CD4-positive, alpha-beta T cell (primary cell): ENCODE measurements at regions of chr4 and their contacts with region 1.

Region 1: DNA sequence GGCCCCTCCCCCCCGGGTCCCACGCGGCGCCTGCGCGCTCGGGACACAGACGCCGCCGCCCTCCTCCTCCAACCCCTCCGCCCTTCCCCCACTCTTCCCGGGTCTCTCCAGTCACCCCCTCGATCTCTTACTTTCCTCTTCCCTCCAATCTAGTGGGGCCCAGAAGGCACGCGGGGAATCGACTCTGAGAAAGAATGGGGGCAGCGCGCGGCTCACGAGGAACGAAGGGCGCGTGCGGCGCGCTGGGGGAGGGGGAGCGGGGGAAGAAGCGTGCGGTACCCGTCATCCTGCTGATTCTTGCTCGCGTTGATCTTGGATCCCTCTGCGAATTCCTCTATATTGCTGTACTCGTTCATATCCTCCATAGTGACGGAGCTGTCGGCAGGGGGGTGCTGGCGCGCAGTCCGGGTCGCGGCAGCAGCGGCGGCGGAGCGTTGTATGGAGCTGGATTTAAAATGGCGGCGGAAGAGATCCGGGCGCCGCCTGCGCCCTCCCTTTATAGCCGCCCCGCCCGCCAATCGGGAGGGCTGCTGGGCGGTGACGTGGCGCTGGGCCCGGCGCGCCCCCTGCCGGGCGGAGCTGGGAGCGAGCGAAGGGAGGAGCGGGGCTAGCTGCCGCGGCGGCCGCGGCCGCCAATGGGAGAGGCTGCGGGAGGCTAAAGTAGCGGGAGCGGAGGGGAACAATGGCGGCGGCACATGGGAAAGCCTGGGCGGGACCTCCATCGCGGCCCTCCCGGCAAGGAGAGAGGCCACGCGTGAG is 1.1 kb downstream of the HNRNPDL start:
- DNase-seq: peak; percentile 87 to 98 (median 94)
- ATAC-seq: peak; percentile 59
- H3K4me3 ChIP-seq: peak overlapping the region; percentile 93
- H3K4me3 Mint-ChIP-seq: peak overlapping the region; percentile 100
- H3K27ac ChIP-seq: peak overlapping the region; percentile 98 to 99
- H3K27ac Mint-ChIP-seq: peak overlapping the region; percentile 99
- H3K4me1 ChIP-seq: peaks cover 36% of the 10 kb centered on the region
- H3K4me1 Mint-ChIP-seq: peaks cover 84% of the 10 kb centered on the region
- H3K27me3 ChIP-seq: no peaks in the 10 kb centered on the region
- H3K27me3 Mint-ChIP-seq: peaks cover 4% of the 10 kb centered on the region
- CTCF ChIP-seq: peak; percentile 91

Region 2: GRCh38 chr4:82352913-82353366 is 76.2 kb before region 1 on chr4:
- CTCF ChIA-PET with region 1: interaction called, 4 read pairs
- POLR2A ChIA-PET with region 1: interaction called, 18 read pairs
- intact Hi-C with region 1: no loop called
- DNase-seq: no peak
- ATAC-seq: peak; percentile 17
- H3K4me3 ChIP-seq: no peak overlapping the region
- H3K4me3 Mint-ChIP-seq: no peak overlapping the region
- H3K27ac ChIP-seq: no peak overlapping the region
- H3K27ac Mint-ChIP-seq: peak overlapping the region; percentile 77
- H3K4me1 ChIP-seq: peaks cover 4% of the 10 kb centered on the region
- H3K4me1 Mint-ChIP-seq: peaks cover 61% of the 10 kb centered on the region
- H3K27me3 ChIP-seq: no peaks in the 10 kb centered on the region
- H3K27me3 Mint-ChIP-seq: no peaks in the 10 kb centered on the region
- CTCF ChIP-seq: no peak

Region 3: DNA sequence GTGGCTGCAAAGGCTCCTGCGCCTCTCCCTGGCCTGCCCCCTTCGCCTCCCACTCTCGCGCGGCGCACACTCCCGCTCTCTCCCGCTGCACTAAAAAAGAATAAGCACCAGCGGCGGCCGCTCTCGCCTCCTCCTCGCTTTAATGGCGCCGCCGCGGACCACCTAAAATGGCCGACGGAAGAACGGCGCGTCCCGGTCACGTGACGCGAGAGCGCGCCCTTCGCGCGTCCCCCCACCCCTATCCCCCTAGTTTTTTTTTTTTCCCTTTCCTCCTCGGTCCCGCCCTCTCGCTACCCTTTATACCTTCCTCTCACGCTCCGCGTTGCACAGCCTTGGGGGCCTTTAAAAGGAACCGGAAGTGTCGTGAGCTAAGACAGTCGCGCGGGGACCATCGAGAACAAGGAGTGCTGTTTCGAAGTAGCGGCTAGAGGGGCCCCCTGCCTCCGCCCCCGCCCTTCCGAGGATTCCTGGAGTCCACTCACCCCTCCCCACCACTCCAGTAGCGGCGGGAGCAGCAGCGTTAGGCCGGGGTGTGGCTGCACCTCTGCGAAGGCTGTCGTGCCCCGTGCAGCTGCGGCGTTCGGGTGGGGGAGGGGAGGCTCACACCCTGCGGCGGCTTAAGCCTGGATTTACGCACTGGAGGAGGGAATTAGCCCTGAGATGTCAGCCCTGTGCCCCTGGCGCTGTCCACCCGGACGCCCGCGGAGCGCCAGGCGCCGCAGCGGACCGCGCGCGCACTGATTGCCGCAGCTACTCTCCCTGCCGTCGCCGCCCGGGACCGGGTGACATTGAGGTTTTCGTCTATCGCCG is 55.1 kb before region 1 on chr4 and contains the start of gene HNRNPD:
- CTCF ChIA-PET with region 1: interaction called, 28 read pairs
- POLR2A ChIA-PET with region 1: interaction called, 277 read pairs
- intact Hi-C with region 1: loop called (anchors 1 kb)
- DNase-seq: peak; percentile 77 to 99 (median 88)
- ATAC-seq: peak; percentile 83
- H3K4me3 ChIP-seq: peak within 1 kb of the TSS; percentile 97
- H3K4me3 Mint-ChIP-seq: peak within 1 kb of the TSS; percentile 99
- H3K27ac ChIP-seq: peak within 1 kb of the TSS; percentile 99
- H3K27ac Mint-ChIP-seq: peak within 1 kb of the TSS; percentile 98
- H3K4me1 ChIP-seq: peaks cover 24% of the 10 kb centered on the region
- H3K4me1 Mint-ChIP-seq: peaks cover 71% of the 10 kb centered on the region
- H3K27me3 ChIP-seq: no peaks in the 10 kb centered on the region
- H3K27me3 Mint-ChIP-seq: no peaks in the 10 kb centered on the region
- CTCF ChIP-seq: peak; percentile 11
- total RNA-seq, gene HNRNPD: 235 to 244 TPM

Region 4: DNA sequence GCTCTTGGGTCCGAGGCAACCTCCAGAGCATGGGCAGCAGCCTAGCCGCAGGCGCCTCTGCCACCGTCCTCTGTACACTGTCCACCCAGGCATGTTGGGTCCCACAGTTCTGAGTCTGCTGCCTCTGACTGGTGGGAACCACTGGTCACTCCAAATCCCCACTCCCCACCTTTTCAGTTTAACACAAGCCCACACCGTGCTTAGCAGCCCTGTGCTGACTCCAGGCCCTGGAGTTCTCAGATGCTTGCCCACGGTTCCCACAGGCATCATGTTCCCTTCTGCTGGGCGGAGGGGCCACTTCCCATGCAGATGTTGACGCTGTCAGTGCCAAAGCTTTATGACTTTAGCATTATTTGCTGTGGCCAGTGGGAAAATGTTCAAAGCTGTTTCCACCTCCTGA is 264.9 kb after region 1 on chr4:
- CTCF ChIA-PET with region 1: no interaction called
- POLR2A ChIA-PET with region 1: no interaction called
- intact Hi-C with region 1: no loop called
- DNase-seq: no peak
- ATAC-seq: no peak
- H3K4me3 ChIP-seq: no peak overlapping the region
- H3K4me3 Mint-ChIP-seq: no peak overlapping the region
- H3K27ac ChIP-seq: no peak overlapping the region
- H3K27ac Mint-ChIP-seq: no peak overlapping the region
- H3K4me1 ChIP-seq: no peaks in the 10 kb centered on the region
- H3K4me1 Mint-ChIP-seq: no peaks in the 10 kb centered on the region
- H3K27me3 ChIP-seq: peaks cover 0 to 2% of the 10 kb centered on the region in 2 experiments
- H3K27me3 Mint-ChIP-seq: no peaks in the 10 kb centered on the region
- CTCF ChIP-seq: no peak

Region 5: GRCh38 chr4:82900331-82901128 is 471.4 kb after region 1 on chr4 and contains the start of gene THAP9:
- CTCF ChIA-PET with region 1: interaction called, 3 read pairs
- POLR2A ChIA-PET with region 1: interaction called, 33 read pairs
- intact Hi-C with region 1: loop called in 1 of 2 experiments (anchors 5 kb)
- DNase-seq: peak; percentile 94 to 100 (median 96)
- ATAC-seq: peak; percentile 86
- H3K4me3 ChIP-seq: peak within 1 kb of the TSS; percentile 72
- H3K4me3 Mint-ChIP-seq: no peak within 1 kb of the TSS
- H3K27ac ChIP-seq: peak within 1 kb of the TSS; percentile 94 to 99
- H3K27ac Mint-ChIP-seq: no peak within 1 kb of the TSS
- H3K4me1 ChIP-seq: peaks cover 11% of the 10 kb centered on the region
- H3K4me1 Mint-ChIP-seq: peaks cover 13% of the 10 kb centered on the region
- H3K27me3 ChIP-seq: no peaks in the 10 kb centered on the region
- H3K27me3 Mint-ChIP-seq: no peaks in the 10 kb centered on the region
- CTCF ChIP-seq: no peak
- total RNA-seq, gene THAP9: 3.8 to 4.3 TPM

Region 6: GRCh38 chr4:83284193-83285054 is 855.3 kb after region 1 on chr4 and contains the start of gene COQ2:
- CTCF ChIA-PET with region 1: no interaction called
- POLR2A ChIA-PET with region 1: interaction called, 10 read pairs
- intact Hi-C with region 1: no loop called
- DNase-seq: peak; percentile 90 to 97 (median 94)
- ATAC-seq: peak; percentile 91
- H3K4me3 ChIP-seq: peak within 1 kb of the TSS; percentile 77
- H3K4me3 Mint-ChIP-seq: peak within 1 kb of the TSS; percentile 99
- H3K27ac ChIP-seq: peak within 1 kb of the TSS; percentile 72 to 83
- H3K27ac Mint-ChIP-seq: peak within 1 kb of the TSS; percentile 98
- H3K4me1 ChIP-seq: peaks cover 7% of the 10 kb centered on the region
- H3K4me1 Mint-ChIP-seq: peaks cover 41% of the 10 kb centered on the region
- H3K27me3 ChIP-seq: no peaks in the 10 kb centered on the region
- H3K27me3 Mint-ChIP-seq: no peaks in the 10 kb centered on the region
- CTCF ChIP-seq: no peak
- total RNA-seq, gene COQ2: 9.2 to 10.1 TPM